ENCODE measurements at regions of chr7 and their contacts with region 1.

Region 1: DNA sequence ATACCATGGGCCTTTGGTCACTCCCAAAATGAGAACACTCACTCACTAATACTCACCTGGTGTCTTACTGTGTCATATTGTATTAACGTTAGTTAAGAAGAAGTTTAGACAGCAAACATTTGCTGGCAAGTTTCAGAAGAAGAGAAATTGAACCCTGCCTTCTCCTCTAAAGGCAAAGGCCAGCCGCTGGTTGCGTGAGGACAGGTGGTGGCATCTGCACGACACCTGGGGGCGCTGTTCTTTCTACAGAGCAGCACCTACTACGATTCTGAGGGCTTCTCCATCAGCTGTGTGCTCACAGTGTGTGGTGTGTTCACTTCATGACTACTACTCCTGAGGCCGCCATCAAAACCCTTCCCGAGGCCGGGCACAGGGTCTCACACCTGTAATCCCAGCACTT is 17.9 kb upstream of the CLEC2L start:
- DNase-seq: peak; percentile 39
- H3K4me3 Mint-ChIP-seq: no peak overlapping the region
- H3K27ac Mint-ChIP-seq: no peak overlapping the region
- H3K4me1 Mint-ChIP-seq: no peaks in the 10 kb centered on the region
- H3K27me3 Mint-ChIP-seq: no peaks in the 10 kb centered on the region
- CTCF ChIP-seq: no peak

Region 2: DNA sequence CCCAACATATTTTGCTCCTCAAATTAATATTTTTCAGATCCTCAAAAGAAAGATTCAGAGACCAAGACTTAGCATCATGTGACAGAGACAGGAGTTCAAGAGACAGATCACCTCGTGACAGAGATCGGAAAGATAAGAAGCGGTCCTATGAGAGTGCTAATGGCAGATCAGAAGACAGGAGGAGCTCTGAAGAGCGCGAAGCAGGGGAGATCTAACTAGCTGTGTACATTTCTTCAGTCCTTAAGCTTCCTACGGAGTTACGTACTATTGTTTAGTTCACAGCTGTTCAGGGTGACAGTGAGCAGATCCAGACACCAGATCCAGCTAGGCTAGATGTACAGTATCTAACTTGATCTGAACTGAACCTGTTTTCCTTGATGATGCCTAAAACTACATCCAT is 83.4 kb before region 1 on chr7:
- CTCF ChIA-PET with region 1: no interaction called
- POLR2A ChIA-PET with region 1: no interaction called
- intact Hi-C with region 1: no loop called
- DNase-seq: no peak
- H3K4me3 Mint-ChIP-seq: no peak overlapping the region
- H3K27ac Mint-ChIP-seq: no peak overlapping the region
- H3K4me1 Mint-ChIP-seq: no peaks in the 10 kb centered on the region
- H3K27me3 Mint-ChIP-seq: no peaks in the 10 kb centered on the region
- CTCF ChIP-seq: no peak

Region 3: DNA sequence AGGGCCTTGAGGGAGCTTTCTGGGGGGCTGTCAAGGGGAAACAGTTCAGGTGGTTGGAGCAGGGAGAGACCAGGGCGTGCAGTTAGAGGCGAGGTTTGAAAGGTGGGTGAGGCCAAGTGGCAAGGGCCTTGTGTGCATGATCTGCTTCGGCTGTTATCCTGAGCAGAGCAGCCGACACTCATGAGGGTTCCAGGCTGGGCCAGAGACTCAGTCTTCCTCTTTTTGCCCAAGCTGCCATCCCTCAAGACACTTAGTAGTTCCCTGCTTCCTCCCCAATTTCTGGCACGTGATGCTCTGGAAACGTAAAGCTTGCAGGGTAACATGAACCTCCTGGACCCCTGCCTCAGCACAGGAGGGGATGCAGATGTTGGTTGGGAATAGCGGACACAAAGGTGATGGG is 66.2 kb before region 1 on chr7:
- CTCF ChIA-PET with region 1: interaction called, 11 read pairs
- POLR2A ChIA-PET with region 1: no interaction called
- intact Hi-C with region 1: no loop called
- DNase-seq: no peak
- H3K4me3 Mint-ChIP-seq: no peak overlapping the region
- H3K27ac Mint-ChIP-seq: peak overlapping the region; percentile 20
- H3K4me1 Mint-ChIP-seq: peaks cover 11% of the 10 kb centered on the region
- H3K27me3 Mint-ChIP-seq: no peaks in the 10 kb centered on the region
- CTCF ChIP-seq: no peak

Region 4: GRCh38 chr7:139488810-139489209 is 16.8 kb before region 1 on chr7:
- CTCF ChIA-PET with region 1: interaction called, 16 read pairs
- POLR2A ChIA-PET with region 1: interaction called, 8 read pairs
- intact Hi-C with region 1: no loop called
- DNase-seq: no peak
- H3K4me3 Mint-ChIP-seq: no peak overlapping the region
- H3K27ac Mint-ChIP-seq: no peak overlapping the region
- H3K4me1 Mint-ChIP-seq: peaks cover 15% of the 10 kb centered on the region
- H3K27me3 Mint-ChIP-seq: no peaks in the 10 kb centered on the region
- CTCF ChIP-seq: no peak

Region 5: GRCh38 chr7:139494835-139495579 is 10.6 kb before region 1 on chr7:
- CTCF ChIA-PET with region 1: interaction called, 16 read pairs
- POLR2A ChIA-PET with region 1: interaction called, 8 read pairs
- intact Hi-C with region 1: no loop called
- DNase-seq: no peak
- H3K4me3 Mint-ChIP-seq: no peak overlapping the region
- H3K27ac Mint-ChIP-seq: peak overlapping the region; percentile 0
- H3K4me1 Mint-ChIP-seq: peaks cover 18% of the 10 kb centered on the region
- H3K27me3 Mint-ChIP-seq: no peaks in the 10 kb centered on the region
- CTCF ChIP-seq: no peak

Region 6: DNA sequence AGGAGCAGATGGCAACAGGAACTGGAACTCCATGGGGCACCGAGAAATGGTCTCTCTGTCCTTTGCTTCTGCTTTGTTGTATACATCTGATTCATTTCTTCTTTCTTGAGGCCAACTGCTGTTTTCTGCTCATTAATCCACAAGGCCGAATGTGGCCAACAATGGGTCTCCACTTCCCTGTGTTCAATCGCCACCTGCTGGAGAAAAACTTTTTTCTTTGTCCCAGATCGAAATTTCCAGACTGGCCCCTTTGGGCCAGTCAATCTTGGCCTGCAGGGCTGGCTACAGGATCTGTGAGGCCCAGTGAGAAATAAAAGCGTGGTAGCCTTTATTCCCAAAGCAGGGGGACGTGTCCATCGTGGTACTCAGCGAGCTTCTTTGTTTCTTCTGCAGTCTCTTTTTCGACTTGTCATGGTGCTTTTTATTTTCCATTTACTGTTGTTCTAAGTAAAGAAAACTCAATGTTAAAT is 498.4 kb after region 1 on chr7:
- CTCF ChIA-PET with region 1: interaction called, 6 read pairs
- POLR2A ChIA-PET with region 1: no interaction called
- intact Hi-C with region 1: loop called (anchors 1 kb)
- DNase-seq: peak; percentile 80
- H3K4me3 Mint-ChIP-seq: no peak overlapping the region
- H3K27ac Mint-ChIP-seq: no peak overlapping the region
- H3K4me1 Mint-ChIP-seq: no peaks in the 10 kb centered on the region
- H3K27me3 Mint-ChIP-seq: no peaks in the 10 kb centered on the region
- CTCF ChIP-seq: peak; percentile 56